Naive thymus-derived CD4-positive, alpha-beta T cell (primary cell): ENCODE measurements at regions of chr15 and their contacts with region 1.

Region 1: DNA sequence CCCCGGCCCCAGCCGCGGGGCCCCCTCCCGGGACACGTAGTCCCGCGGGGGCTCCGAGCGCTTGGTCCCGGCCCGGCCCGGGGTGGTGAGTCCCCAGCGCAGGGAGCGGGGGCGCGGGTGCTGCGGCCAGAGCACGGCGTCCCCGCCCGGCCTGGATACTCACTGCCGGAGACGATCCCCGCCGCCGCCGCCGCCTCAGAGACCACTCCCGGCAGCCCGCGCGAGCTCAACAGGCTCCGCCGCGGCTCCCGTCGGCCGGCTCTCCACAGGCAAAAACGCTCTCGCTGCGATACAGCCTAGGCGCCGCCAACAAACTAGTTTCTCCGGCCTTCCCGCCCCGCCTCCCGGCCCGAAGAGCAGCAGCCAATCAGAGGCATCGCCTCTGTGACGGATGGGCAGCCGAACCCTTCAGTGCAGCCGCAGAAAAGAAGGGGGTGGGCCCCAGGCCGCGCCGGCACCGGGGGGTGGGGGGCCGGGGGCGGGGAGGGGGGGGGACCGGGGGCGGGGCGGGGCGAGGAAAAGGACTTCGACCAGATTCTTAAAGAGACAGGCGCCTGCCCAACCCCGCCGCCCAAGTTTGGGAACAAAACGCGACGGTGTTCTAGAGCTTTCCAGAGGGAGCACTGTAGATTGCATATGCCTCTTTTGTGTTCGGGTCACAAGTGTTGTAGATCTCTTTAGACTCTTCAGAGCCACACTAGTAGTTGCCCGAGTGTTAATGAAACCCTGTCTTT is at the start of gene KLHL25:
- DNase-seq: peak; percentile 77 to 93 (median 91)
- ATAC-seq: peak; percentile 99
- H3K4me3 ChIP-seq: peak within 1 kb of the TSS; percentile 66
- H3K4me3 Mint-ChIP-seq: peak within 1 kb of the TSS; percentile 85 to 96 (median 94)
- H3K27ac ChIP-seq: peak within 1 kb of the TSS; percentile 84
- H3K27ac Mint-ChIP-seq: peak within 1 kb of the TSS; percentile 77 to 91 (median 86)
- H3K4me1 ChIP-seq: peaks cover 22 to 28% of the 10 kb centered on the region in 2 donors
- H3K4me1 Mint-ChIP-seq: peaks cover 26 to 49% (median 44%) of the 10 kb centered on the region in 7 donors
- H3K27me3 ChIP-seq: no peaks in the 10 kb centered on the region
- H3K27me3 Mint-ChIP-seq: peaks cover 0 to 3% (median 0%) of the 10 kb centered on the region in 5 donors
- total RNA-seq, gene KLHL25: 5.5 to 13.1 (median 10.6) TPM

Region 2: GRCh38 chr15:85730001-85730820 is 64.6 kb before region 1 on chr15:
- CTCF ChIA-PET with region 1: no interaction called
- POLR2A ChIA-PET with region 1: interaction called, 5 read pairs
- intact Hi-C with region 1: loop called (anchors 2 to 5 kb)
- DNase-seq: peak in 7 of 9 donors; percentile 48 to 72 (median 62)
- ATAC-seq: peak; percentile 90
- H3K4me3 ChIP-seq: no peak overlapping the region
- H3K4me3 Mint-ChIP-seq: no peak overlapping the region
- H3K27ac ChIP-seq: no peak overlapping the region
- H3K27ac Mint-ChIP-seq: peak overlapping the region; percentile 7 to 88 (median 47)
- H3K4me1 ChIP-seq: no peaks in the 10 kb centered on the region
- H3K4me1 Mint-ChIP-seq: peaks cover 0 to 28% (median 14%) of the 10 kb centered on the region in 7 donors
- H3K27me3 ChIP-seq: no peaks in the 10 kb centered on the region
- H3K27me3 Mint-ChIP-seq: no peaks in the 10 kb centered on the region

Region 3: DNA sequence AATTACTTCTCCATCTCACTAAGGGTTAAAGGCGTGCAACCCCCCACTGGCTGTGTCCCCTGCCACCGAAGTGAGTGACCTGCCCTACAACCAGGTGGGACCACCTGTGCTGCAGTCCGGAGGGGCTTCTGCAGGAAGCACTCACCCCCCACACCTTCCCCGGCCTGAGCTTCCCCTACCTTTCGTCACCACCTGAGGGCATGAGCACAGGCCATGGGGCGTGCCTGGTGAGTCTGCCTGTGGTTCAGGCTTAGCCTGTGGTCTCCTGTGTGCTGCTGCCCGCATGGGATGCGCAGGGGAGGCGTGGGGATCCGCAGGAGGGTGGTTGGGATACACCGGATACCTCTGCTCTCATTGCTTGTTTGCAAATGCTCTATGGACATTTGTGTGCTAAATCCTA is 46.0 kb before region 1 on chr15:
- CTCF ChIA-PET with region 1: no interaction called
- POLR2A ChIA-PET with region 1: interaction called, 3 read pairs
- intact Hi-C with region 1: loop called in 1 of 2 experiments (anchors 1 kb)
- DNase-seq: no peak
- ATAC-seq: no peak
- H3K4me3 ChIP-seq: no peak overlapping the region
- H3K4me3 Mint-ChIP-seq: no peak overlapping the region
- H3K27ac ChIP-seq: no peak overlapping the region
- H3K27ac Mint-ChIP-seq: peak overlapping the region in 5 of 9 donors; percentile 0 to 72 (median 38)
- H3K4me1 ChIP-seq: peaks cover 0 to 8% of the 10 kb centered on the region in 2 donors
- H3K4me1 Mint-ChIP-seq: peaks cover 9 to 33% (median 23%) of the 10 kb centered on the region in 7 donors
- H3K27me3 ChIP-seq: no peaks in the 10 kb centered on the region
- H3K27me3 Mint-ChIP-seq: no peaks in the 10 kb centered on the region

Region 4: DNA sequence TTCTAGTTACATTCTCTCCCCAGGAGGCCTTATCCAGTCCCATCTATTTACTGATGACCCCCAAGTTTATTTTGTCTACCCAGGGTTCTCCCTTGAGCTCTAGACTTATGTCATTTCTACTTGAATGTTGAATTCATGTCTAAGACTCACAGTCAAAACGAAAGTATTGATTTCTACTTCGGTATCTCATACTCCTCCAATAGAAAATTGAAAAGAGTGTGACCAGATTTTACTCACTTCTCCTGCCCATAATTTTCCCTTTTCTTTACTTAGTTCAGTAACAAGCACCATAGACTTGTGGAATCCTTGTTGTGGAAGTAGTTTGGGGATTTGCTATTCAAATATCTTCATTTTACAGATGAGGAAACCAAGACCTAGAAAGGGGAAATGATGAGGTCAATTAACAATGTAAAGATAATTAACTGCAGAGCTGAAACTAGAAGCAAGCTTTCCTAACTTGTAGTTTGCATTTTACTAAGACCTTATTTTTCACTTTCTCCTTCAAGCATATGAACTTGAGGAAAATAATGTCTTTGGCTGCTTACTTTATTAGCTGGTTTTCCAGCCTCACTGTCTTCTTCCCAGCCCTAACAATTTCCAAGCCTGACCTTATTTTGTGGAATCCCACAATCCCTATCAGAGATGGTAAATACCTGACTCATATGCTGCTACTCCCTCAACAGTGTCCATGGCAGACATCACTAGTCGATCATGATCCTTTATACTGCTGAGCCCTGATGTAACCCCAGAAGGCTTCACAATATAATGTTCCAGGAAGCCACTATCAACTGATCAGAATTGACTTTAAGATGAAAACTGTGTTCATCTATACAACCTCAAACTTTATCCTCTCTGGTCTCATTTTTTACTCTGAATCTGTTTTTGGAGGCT is 161.0 kb after region 1 on chr15:
- CTCF ChIA-PET with region 1: no interaction called
- POLR2A ChIA-PET with region 1: no interaction called
- intact Hi-C with region 1: no loop called
- DNase-seq: no peak
- ATAC-seq: no peak
- H3K4me3 ChIP-seq: no peak overlapping the region
- H3K4me3 Mint-ChIP-seq: no peak overlapping the region
- H3K27ac ChIP-seq: no peak overlapping the region
- H3K27ac Mint-ChIP-seq: no peak overlapping the region
- H3K4me1 ChIP-seq: no peaks in the 10 kb centered on the region
- H3K4me1 Mint-ChIP-seq: peaks cover 0 to 6% (median 0%) of the 10 kb centered on the region in 7 donors
- H3K27me3 ChIP-seq: no peaks in the 10 kb centered on the region
- H3K27me3 Mint-ChIP-seq: peaks cover 0 to 31% (median 3%) of the 10 kb centered on the region in 5 donors